Activated B cell treated with CpG ODN at 0.5 μM for 24 hours (primary cell): ENCODE measurements at regions of chr3 and their contacts with region 1.

Region 1: DNA sequence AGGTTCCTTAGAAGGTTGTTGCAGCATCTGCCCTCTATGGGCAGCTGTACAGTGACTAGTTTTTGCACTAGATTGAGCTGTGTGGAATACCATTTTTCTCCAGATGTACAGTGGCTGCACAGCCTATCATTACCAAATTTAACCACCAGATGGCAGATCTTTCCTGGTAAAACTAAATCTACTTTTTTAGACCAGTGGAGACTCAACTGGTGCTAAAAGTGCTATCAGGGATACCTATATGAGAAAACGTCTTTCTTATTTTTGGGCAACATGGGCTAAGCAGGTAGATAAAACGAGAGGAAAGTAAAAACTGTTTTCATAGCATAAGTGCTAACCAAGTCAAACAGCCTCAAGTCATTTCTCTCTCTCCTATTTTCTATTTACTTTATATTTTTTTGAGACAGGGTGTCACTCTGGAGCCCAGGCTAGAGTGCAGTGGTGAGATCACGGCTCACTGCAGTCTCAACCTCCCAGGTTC is 21.2 kb downstream of the IGSF10 start:
- DNase-seq: no peak
- ATAC-seq: peak; percentile 81
- H3K4me3 Mint-ChIP-seq: no peak overlapping the region
- H3K27ac Mint-ChIP-seq: no peak overlapping the region
- H3K4me1 Mint-ChIP-seq: peaks cover 3% of the 10 kb centered on the region
- H3K27me3 Mint-ChIP-seq: no peaks in the 10 kb centered on the region
- CTCF ChIP-seq: no peak

Region 2: GRCh38 chr3:151276687-151277042 is 163.0 kb before region 1 on chr3:
- CTCF ChIA-PET with region 1: no interaction called
- POLR2A ChIA-PET with region 1: no interaction called
- intact Hi-C with region 1: loop called (anchors 5 kb)
- DNase-seq: peak; percentile 33
- ATAC-seq: peak; percentile 77
- H3K4me3 Mint-ChIP-seq: peak overlapping the region; percentile 75
- H3K27ac Mint-ChIP-seq: peak overlapping the region; percentile 97
- H3K4me1 Mint-ChIP-seq: peaks cover 82% of the 10 kb centered on the region
- H3K27me3 Mint-ChIP-seq: no peaks in the 10 kb centered on the region
- CTCF ChIP-seq: no peak

Region 3: DNA sequence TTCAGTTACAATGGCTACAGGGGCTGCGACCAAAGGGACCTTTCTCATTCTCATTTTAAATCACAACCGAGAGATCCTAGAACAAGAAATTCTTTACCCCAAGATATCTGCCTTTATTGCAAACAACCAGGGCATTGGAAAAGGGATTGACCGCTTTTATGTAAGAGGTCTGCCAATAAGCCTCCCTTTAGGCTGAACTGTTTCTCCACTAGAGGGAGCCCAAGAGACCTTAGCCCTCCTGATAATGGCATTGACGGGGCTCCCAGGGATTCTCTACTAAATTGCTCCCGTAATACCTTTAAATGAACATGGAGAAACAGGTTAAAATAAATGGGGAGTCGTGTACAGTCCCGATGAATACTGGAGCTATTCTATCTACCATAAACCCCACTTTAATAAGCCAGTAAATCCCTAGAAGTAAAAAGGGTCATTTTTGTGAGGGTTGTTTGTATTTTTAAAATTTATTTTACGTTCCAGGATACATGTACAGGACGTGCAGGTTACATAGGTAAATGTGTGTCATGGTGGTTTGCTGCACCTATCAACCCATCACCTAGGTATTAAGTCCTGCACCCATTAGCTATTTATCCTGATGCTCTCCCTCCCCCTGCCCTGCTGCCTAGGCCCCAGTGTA is 28.7 kb after region 1 on chr3:
- CTCF ChIA-PET with region 1: interaction called, 20 read pairs
- POLR2A ChIA-PET with region 1: no interaction called
- intact Hi-C with region 1: no loop called
- DNase-seq: no peak
- ATAC-seq: peak; percentile 56
- H3K4me3 Mint-ChIP-seq: no peak overlapping the region
- H3K27ac Mint-ChIP-seq: no peak overlapping the region
- H3K4me1 Mint-ChIP-seq: peaks cover 6% of the 10 kb centered on the region
- H3K27me3 Mint-ChIP-seq: peaks cover 2% of the 10 kb centered on the region
- CTCF ChIP-seq: no peak

Region 4: DNA sequence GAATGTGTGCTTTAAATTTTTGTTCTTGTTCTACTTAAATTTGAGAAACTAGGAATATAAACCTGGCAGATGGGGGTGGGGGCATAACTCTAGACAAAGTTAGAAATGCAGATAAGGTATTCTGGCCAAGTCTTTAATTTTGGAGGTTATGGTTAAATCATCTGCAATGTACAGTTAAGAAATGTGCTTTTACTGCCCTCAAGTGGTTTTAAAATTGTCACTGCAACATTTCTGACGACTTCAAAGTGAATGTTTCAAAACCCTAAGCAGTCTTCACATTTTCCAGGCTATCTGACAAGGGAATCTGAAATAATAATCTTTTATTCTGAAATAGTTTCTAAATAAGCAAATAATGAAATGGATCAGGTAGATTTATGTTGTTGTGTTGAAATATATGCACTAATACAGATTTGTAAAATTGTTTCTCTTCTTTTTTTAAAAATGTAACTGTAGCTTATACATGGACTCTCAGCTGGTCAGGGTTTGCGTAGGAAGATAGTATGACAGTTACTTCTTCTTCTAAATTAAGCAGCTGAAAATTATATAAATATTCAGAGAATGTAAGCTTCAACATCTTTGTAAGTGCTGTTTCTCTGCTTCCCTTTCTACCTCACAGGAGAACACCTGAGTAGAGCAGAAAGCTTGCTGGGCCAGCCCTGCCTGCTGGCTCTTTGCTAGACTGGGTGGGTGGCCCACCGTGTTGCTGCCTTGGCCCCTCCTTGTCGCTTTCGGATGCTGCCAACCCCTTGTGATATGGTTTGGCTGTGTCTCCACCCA is 478.8 kb after region 1 on chr3:
- CTCF ChIA-PET with region 1: interaction called, 21 read pairs
- POLR2A ChIA-PET with region 1: no interaction called
- intact Hi-C with region 1: loop called (anchors 1 kb)
- DNase-seq: no peak
- ATAC-seq: no peak
- H3K4me3 Mint-ChIP-seq: no peak overlapping the region
- H3K27ac Mint-ChIP-seq: no peak overlapping the region
- H3K4me1 Mint-ChIP-seq: no peaks in the 10 kb centered on the region
- H3K27me3 Mint-ChIP-seq: no peaks in the 10 kb centered on the region
- CTCF ChIP-seq: peak; percentile 18

Region 5: DNA sequence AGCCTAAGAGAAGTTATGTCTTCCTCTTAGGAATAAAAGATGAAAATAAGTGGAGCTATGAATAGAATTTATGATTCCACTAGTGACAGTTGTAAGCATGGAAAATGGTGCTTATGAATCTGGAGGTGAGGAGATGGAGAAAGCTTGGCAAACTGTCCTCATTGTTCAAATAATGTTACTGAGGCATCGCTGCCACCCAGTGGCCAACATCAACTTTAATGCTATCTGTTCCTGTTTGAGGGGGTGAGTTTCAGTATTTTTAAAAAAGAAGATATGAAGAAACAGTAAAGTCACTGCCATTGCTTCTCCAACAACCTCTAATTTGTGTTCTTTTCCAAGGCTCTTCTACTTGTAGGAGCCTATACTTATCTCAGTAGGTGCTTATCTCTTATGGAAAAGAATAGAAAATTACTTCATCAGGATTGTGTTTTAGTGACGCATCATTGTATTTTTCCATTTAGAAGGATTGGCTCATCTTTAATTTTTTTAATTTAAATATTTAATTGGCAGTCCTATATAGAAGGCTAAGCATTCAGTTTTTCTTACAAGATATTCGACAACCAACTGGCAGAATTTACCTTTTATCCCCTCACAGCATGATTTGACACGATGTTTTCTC is 1134.9 kb after region 1 on chr3:
- CTCF ChIA-PET with region 1: no interaction called
- POLR2A ChIA-PET with region 1: no interaction called
- intact Hi-C with region 1: loop called (anchors 5 kb)
- DNase-seq: no peak
- ATAC-seq: peak; percentile 52
- H3K4me3 Mint-ChIP-seq: no peak overlapping the region
- H3K27ac Mint-ChIP-seq: no peak overlapping the region
- H3K4me1 Mint-ChIP-seq: no peaks in the 10 kb centered on the region
- H3K27me3 Mint-ChIP-seq: no peaks in the 10 kb centered on the region
- CTCF ChIP-seq: no peak